Activated CD8-positive, alpha-beta T cell treated with anti-CD3 and anti-CD28 coated beads for 36 hours (primary cell): ENCODE measurements at regions of chr1 and their contacts with region 1.

Region 1: GRCh38 chr1:117534995-117535467 is 70.8 kb upstream of the TENT5C start:
- DNase-seq: peak; percentile 40
- ATAC-seq: peak; percentile 78
- H3K4me3 Mint-ChIP-seq: no peak overlapping the region
- H3K27ac Mint-ChIP-seq: no peak overlapping the region
- H3K4me1 Mint-ChIP-seq: peaks cover 25% of the 10 kb centered on the region
- H3K27me3 Mint-ChIP-seq: no peaks in the 10 kb centered on the region
- CTCF ChIP-seq: peak; percentile 65

Region 2: GRCh38 chr1:117512743-117513321 is 22.2 kb before region 1 on chr1:
- CTCF ChIA-PET with region 1: interaction called, 49 read pairs
- POLR2A ChIA-PET with region 1: no interaction called
- intact Hi-C with region 1: no loop called
- DNase-seq: no peak
- ATAC-seq: no peak
- H3K4me3 Mint-ChIP-seq: no peak overlapping the region
- H3K27ac Mint-ChIP-seq: no peak overlapping the region
- H3K4me1 Mint-ChIP-seq: no peaks in the 10 kb centered on the region
- H3K27me3 Mint-ChIP-seq: no peaks in the 10 kb centered on the region
- CTCF ChIP-seq: peak; percentile 65

Region 3: GRCh38 chr1:117572546-117572945 is 37.5 kb after region 1 on chr1:
- CTCF ChIA-PET with region 1: interaction called, 14 read pairs
- POLR2A ChIA-PET with region 1: interaction called, 4 read pairs
- intact Hi-C with region 1: no loop called
- DNase-seq: peak; percentile 36
- ATAC-seq: peak; percentile 71
- H3K4me3 Mint-ChIP-seq: no peak overlapping the region
- H3K27ac Mint-ChIP-seq: no peak overlapping the region
- H3K4me1 Mint-ChIP-seq: peaks cover 16% of the 10 kb centered on the region
- H3K27me3 Mint-ChIP-seq: no peaks in the 10 kb centered on the region
- CTCF ChIP-seq: no peak

Region 4: DNA sequence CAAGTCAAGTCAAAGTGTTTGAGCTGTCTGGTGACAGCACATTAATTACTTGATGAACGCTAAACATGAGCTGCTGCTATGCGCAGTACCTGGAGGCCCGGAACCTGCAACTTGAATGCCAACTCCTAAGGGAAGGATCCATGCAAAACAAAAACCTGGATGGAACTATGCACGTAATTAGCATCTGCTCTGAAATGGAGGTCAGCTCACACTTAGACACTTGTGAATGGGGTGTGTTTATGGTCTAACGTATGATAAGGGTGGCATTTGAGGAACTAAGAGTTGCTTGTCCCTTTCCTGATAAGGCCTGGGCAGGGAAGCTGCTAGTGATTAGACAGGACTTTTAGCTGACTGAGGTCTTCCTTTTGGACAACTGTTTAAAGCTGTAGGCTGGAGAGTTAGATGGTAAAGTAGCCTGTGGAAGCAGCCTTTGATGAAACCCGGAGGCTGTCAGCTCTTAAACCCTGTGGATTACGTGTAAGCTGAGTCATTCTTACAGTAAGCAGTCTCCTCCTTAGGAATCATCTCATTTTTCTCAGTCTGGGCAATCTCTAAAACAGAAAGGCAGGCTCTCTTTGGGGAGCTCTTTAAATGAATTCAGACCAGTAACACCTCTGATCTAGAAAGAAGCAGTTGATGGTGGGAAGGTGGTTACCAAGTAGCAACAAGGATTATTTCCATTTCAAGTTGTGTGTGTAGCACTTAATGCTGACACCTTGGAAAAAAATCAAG is 77.7 kb after region 1 on chr1:
- CTCF ChIA-PET with region 1: interaction called, 30 read pairs
- POLR2A ChIA-PET with region 1: interaction called, 3 read pairs
- intact Hi-C with region 1: loop called (anchors 10 kb)
- DNase-seq: no peak
- ATAC-seq: peak; percentile 28
- H3K4me3 Mint-ChIP-seq: no peak overlapping the region
- H3K27ac Mint-ChIP-seq: no peak overlapping the region
- H3K4me1 Mint-ChIP-seq: peaks cover 65% of the 10 kb centered on the region
- H3K27me3 Mint-ChIP-seq: peaks cover 30% of the 10 kb centered on the region
- CTCF ChIP-seq: no peak

Region 5: DNA sequence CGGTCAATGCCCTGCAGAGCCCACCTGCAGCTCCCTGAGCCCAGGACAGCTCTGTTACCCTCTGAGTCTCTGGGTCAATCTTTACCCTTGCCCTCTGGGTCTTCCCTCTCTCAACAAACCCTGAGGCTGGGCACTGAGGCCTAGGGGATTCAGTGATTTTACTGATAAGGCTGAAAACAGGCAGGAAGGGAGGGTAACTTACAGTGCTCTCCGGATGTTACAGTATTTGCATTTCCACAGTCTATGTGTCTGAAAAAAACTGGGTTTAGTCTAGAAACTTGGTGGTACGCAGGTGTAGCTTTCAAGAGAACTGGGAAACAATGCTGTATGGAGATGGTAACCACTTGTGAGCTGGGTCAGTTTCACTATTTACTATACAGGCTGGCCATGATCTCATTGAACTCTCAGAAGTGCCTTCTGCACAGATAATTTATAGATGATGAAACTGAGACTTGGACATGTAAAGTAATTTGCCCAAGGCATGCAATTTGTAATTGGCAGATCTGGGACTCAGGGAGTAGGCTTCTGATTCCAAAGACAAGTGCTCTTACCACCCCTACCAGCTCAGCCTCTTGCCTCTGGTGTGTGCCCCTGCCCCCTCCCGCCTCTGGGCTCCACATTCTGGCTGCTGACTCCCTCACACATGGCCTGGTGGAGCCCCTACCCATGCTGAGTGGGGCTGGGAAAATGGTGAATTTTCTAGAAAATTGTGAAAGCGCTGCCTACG is 119.6 kb after region 1 on chr1:
- CTCF ChIA-PET with region 1: interaction called, 42 read pairs
- POLR2A ChIA-PET with region 1: interaction called, 11 read pairs
- intact Hi-C with region 1: loop called (anchors 5 kb)
- DNase-seq: peak; percentile 35
- ATAC-seq: peak; percentile 54
- H3K4me3 Mint-ChIP-seq: no peak overlapping the region
- H3K27ac Mint-ChIP-seq: peak overlapping the region; percentile 60
- H3K4me1 Mint-ChIP-seq: peaks cover 76% of the 10 kb centered on the region
- H3K27me3 Mint-ChIP-seq: peaks cover 31% of the 10 kb centered on the region
- CTCF ChIP-seq: no peak

Region 6: DNA sequence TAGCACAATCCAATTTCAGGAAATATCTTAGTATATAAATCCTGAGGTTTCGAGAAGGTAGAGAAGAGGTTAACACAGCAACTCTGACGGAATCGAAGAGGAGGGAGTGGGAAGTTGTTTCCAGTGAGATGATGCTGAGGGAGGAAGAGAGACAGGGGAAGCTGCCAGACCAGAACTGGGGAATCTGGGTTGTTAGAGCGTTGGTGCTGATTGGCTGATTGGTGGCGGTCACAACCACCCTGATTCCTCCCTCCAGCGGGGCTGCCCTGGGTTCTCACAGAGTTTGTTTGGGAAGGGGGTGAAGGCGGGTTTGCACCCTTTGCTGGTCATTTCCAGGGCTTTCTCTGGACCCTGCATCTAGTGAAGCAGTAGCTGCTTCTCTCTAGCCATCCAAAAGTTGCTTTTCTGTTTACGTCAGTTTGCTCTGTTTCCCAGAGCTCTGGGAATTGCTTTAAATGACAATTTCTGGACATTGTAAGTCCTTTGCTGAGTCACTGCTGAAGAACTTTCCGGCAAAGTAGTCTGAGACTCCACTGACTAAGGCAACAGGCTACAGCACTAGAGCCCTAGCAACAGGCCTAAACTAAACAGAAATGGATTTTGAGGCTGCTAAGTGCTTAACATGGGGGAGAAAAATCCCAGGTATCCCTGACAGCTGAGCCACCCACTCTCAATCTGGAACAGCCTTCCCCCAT is 160.9 kb after region 1 on chr1:
- CTCF ChIA-PET with region 1: interaction called, 11 read pairs
- POLR2A ChIA-PET with region 1: no interaction called
- intact Hi-C with region 1: no loop called
- DNase-seq: no peak
- ATAC-seq: no peak
- H3K4me3 Mint-ChIP-seq: no peak overlapping the region
- H3K27ac Mint-ChIP-seq: no peak overlapping the region
- H3K4me1 Mint-ChIP-seq: no peaks in the 10 kb centered on the region
- H3K27me3 Mint-ChIP-seq: peaks cover 13% of the 10 kb centered on the region
- CTCF ChIP-seq: no peak

Region 7: DNA sequence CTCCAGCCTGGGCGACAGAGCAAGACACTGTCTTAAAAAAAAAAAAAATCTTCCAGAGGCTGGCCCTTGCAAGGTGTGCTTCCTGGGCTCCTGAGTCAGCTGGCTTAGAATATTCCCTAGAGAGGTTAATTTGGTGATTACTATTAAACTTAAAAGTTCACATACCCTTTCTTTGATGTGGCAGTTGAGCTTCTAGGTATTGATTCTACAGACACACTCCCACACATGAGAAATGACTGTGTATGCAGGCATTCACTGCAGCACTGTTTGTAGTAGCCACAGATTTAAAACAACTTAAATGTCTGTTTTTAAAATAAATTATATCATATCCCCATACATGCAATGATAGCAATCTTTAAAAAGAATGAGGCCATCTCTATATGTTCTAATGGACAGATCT is 301.0 kb after region 1 on chr1:
- CTCF ChIA-PET with region 1: no interaction called
- POLR2A ChIA-PET with region 1: no interaction called
- intact Hi-C with region 1: no loop called
- DNase-seq: no peak
- ATAC-seq: no peak
- H3K4me3 Mint-ChIP-seq: no peak overlapping the region
- H3K27ac Mint-ChIP-seq: no peak overlapping the region
- H3K4me1 Mint-ChIP-seq: no peaks in the 10 kb centered on the region
- H3K27me3 Mint-ChIP-seq: no peaks in the 10 kb centered on the region
- CTCF ChIP-seq: no peak

Region 8: GRCh38 chr1:117895482-117896114 is 360.6 kb after region 1 on chr1:
- CTCF ChIA-PET with region 1: interaction called, 36 read pairs
- POLR2A ChIA-PET with region 1: no interaction called
- intact Hi-C with region 1: loop called (anchors 10 kb)
- DNase-seq: peak; percentile 85
- ATAC-seq: peak; percentile 88
- H3K4me3 Mint-ChIP-seq: no peak overlapping the region
- H3K27ac Mint-ChIP-seq: no peak overlapping the region
- H3K4me1 Mint-ChIP-seq: peaks cover 2% of the 10 kb centered on the region
- H3K27me3 Mint-ChIP-seq: no peaks in the 10 kb centered on the region
- CTCF ChIP-seq: peak; percentile 82